Activated naive CD4-positive, alpha-beta T cell treated with anti-CD3 and anti-CD28 coated beads, Interleukin-2, amount 10 ng/mL, durations not matched to agents 7 days and 5 days (primary cell): ENCODE measurements at regions of chr17 and their contacts with region 1.

Region 1: DNA sequence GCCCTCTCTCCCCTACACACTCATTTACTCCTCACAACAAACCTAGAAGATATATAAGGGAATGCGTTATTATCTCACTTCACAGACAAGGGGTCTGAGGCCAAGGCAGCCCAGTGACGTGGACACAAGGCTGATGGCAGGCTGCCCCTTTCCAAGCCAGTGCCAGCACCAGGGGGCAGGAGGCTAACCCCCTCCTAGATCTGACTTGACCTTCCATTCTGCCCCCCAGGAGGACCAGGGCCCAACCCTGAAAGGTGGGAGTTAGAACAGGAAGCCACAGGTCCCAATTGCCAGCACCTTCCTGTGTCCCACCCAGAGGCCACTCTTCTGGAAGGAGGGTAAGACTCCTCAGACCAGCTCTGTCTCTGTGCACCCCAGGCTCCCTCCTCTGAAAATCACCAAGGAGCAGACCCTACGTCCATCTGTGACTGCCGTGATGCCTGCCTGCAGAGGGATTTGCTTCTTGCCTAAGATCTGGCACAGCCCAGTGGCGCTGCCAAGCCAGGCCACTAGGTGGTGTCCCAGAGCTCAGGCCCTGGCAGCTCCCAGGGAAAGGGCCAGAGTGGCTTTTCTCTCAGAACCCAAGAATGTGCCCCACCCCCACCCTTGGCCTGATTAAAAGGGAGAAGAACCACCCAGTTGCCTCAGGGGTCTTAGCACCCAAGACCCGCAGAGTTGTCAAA is 42.4 kb upstream of the MRPS23 start:
- DNase-seq: peak; percentile 84
- H3K4me3 Mint-ChIP-seq: no peak overlapping the region
- H3K27ac Mint-ChIP-seq: no peak overlapping the region
- H3K4me1 Mint-ChIP-seq: peaks cover 7% of the 10 kb centered on the region
- H3K27me3 Mint-ChIP-seq: peaks cover 54% of the 10 kb centered on the region

Region 2: DNA sequence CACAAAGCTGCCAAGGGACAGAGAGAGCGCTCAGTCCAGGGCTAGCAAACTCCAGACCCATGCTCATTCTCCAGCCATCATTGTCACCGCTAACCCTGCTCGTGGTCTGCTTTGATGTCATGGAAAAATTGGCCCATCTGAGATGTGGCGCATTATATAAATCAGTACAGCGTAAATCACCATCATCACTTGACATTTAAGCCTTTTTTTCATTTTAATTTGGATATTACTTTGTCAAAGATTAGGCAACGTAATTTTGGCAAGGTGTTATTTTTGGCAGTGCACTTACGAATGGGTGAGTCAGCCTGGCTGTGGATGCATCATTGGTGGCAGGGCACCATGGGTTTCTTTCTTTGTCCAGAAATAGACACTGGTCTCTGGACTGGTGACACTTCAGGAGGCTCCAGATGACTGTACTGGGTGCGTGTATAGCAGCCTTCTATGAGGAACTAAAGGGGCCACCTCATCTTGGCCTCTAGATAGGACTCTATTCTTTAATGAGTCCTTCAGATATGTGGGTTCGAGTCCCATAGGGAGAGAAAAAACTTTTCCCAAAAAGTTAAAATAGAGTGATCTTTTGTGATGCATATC is 469.6 kb before region 1 on chr17:
- CTCF ChIA-PET with region 1: no interaction called
- DNase-seq: no peak
- H3K4me3 Mint-ChIP-seq: no peak overlapping the region
- H3K27ac Mint-ChIP-seq: peak overlapping the region; percentile 33
- H3K4me1 Mint-ChIP-seq: peaks cover 19% of the 10 kb centered on the region
- H3K27me3 Mint-ChIP-seq: no peaks in the 10 kb centered on the region

Region 3: DNA sequence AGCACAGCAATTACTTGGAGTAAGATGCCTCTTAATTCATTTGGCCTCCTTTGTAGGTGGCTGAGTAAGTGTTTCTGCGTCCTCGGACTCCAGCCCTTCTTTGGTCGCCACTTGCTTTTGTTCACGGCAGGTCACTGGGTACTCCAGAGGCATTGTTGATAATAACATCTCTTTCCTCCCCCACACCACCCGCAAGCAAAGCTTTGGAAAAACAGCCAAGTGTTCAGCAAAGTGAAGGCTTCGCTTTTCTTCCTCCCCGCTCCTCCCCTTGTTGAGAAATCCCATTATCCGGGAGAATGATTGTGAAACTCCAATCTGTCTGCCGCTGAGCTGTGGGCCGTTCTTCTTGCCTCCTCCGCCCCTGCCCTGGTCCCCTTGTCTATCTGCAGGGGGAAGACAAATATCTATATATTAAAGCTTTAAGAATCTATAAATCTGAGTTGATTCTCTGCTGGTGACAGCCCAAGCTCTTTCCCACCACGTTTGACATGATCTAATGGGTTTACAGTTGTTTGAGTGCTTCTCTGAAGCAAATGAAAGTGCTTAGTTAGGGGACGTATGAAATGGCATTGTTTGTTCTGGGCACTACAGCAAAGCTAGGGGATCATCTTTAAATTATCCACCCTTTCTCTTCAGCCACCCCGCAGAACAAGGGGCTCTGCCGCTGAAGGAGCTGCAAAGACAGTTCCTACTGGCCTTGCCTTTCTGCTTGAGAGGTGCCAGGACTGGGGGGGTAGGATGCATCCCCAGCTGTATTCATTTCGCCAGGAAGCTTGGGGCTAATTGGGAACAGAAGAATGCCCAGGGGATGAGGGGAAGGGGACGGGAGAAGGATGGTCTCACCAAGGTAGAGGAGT is 314.3 kb before region 1 on chr17:
- CTCF ChIA-PET with region 1: no interaction called
- DNase-seq: no peak
- H3K4me3 Mint-ChIP-seq: no peak overlapping the region
- H3K27ac Mint-ChIP-seq: no peak overlapping the region
- H3K4me1 Mint-ChIP-seq: no peaks in the 10 kb centered on the region
- H3K27me3 Mint-ChIP-seq: no peaks in the 10 kb centered on the region

Region 4: DNA sequence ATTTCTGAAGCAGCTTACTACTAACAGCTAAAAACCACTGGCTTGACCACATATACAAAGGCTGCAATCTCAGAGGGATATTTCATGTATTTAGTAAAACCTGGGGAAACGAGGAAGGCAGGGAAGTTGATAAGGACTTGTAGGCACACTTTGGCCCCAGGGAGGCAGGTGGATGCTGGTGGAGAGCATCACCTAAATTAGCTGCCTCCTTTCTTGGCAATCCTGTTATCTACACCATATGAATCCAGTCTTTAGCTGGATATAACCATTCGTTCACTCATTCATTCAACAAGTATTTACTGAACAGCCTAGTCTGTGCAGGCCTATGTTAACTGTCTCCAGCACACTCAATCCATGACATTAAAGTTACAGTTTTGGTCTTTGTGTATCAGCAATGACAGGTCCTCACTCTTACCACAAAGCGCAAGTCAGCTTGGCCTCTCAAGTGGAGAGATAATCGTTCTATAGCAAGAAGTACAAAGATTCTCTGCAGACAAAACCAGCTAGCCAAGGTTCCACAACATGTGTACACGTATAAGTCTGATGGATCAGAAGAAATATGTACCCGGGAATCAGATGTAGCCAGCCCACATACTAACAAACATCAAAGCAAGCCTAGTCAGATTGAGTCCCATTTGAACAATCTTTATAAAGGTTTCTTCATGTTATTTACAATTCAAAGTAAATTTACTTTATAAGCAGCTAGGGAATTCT is 53.3 kb before region 1 on chr17:
- CTCF ChIA-PET with region 1: no interaction called
- DNase-seq: no peak
- H3K4me3 Mint-ChIP-seq: no peak overlapping the region
- H3K27ac Mint-ChIP-seq: no peak overlapping the region
- H3K4me1 Mint-ChIP-seq: peaks cover 2% of the 10 kb centered on the region
- H3K27me3 Mint-ChIP-seq: no peaks in the 10 kb centered on the region

Region 5: GRCh38 chr17:57861000-57861789 is 31.1 kb before region 1 on chr17:
- CTCF ChIA-PET with region 1: interaction called, 14 read pairs
- DNase-seq: peak; percentile 59
- H3K4me3 Mint-ChIP-seq: peak overlapping the region; percentile 62
- H3K27ac Mint-ChIP-seq: no peak overlapping the region
- H3K4me1 Mint-ChIP-seq: peaks cover 12% of the 10 kb centered on the region
- H3K27me3 Mint-ChIP-seq: peaks cover 74% of the 10 kb centered on the region

Region 6: DNA sequence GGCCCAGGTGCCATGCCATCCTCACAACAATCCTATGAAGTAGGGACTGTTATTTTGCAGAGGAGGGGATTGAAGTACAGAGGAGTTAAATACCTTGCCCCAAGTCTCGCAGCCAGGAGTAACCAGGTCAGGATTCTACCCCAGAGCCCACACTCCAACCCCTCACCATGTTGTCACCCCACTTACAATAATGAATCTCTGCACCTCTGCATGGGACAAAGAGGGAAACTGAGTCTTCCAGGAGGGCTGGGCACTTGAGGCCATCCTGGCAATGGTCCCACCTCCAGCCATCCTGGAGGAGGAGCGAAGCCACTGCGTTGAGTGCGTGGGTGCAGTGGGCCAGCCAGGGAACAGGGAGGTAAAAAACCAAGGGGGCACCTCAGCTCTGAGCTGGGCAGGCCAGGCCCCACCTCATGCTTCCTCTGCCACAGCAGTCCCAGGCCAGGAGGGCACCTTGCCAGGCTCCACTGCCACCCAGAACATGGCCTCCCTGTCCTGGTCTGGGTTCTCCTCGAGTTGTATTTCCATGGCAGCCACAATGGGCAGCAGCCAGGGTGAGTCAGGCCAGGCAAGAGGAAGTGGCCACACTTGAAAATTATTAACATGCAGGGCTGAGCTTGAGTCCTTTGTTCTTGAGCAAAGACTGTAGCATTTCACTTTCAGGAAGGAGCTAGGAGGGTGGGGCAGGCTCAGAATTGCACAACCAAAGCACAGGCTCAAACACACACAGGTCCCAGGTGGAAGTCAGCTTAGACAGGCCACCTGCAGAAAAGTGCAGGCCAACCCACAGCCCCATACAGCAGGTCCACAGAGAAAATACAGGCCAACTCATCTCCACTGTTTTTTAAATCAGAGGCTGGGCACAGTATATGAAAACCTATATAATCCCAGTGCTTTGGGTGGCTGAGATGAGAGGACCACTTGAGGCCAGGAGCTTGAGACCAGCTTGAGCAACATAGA is 10.8 kb after region 1 on chr17:
- CTCF ChIA-PET with region 1: interaction called, 17 read pairs
- DNase-seq: peak; percentile 48
- H3K4me3 Mint-ChIP-seq: no peak overlapping the region
- H3K27ac Mint-ChIP-seq: peak overlapping the region; percentile 47
- H3K4me1 Mint-ChIP-seq: peaks cover 41% of the 10 kb centered on the region
- H3K27me3 Mint-ChIP-seq: peaks cover 8% of the 10 kb centered on the region

Region 7: DNA sequence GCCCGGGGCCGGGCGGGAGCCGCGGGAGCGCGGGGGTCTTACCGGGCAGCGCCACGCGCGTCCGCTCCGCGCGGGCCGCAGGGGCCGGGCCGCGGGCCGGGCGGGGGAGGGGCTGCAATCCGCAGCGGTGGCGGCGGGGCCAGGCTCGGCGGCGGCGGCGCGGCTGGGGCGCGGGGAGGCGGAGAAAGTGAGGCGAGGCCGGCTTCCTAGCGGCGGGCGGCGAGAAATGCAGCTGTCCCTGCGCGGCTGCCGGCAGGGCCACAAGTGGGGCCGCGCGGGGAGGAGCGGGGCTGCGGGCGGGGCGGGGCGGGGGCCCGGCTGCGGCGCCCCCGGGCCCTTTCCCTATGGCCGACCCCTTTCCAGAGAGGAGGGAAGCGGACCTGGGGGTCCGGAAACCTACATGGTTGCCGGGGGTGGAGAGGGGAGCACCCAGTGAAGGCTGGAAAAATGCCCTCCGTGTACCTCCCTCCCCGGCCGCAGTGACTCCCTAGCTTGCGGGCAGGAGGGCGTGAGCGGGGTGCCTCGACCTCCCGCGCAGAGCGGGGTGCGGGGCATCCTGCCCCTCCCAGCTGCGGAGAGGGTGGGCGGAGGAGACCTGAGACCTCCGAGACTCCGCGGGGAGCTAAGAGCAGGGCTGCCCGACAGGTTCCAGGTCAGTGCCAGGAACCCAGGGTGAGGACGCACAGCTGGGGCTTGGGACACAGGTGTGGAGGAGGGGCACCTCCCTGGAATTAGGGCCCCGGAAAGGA is 63.1 kb after region 1 on chr17 and contains the start of gene CUEDC1:
- CTCF ChIA-PET with region 1: interaction called, 18 read pairs
- DNase-seq: peak; percentile 75
- H3K4me3 Mint-ChIP-seq: peak within 1 kb of the TSS; percentile 53
- H3K27ac Mint-ChIP-seq: no peak within 1 kb of the TSS
- H3K4me1 Mint-ChIP-seq: peaks cover 33% of the 10 kb centered on the region
- H3K27me3 Mint-ChIP-seq: peaks cover 80% of the 10 kb centered on the region

Region 8: DNA sequence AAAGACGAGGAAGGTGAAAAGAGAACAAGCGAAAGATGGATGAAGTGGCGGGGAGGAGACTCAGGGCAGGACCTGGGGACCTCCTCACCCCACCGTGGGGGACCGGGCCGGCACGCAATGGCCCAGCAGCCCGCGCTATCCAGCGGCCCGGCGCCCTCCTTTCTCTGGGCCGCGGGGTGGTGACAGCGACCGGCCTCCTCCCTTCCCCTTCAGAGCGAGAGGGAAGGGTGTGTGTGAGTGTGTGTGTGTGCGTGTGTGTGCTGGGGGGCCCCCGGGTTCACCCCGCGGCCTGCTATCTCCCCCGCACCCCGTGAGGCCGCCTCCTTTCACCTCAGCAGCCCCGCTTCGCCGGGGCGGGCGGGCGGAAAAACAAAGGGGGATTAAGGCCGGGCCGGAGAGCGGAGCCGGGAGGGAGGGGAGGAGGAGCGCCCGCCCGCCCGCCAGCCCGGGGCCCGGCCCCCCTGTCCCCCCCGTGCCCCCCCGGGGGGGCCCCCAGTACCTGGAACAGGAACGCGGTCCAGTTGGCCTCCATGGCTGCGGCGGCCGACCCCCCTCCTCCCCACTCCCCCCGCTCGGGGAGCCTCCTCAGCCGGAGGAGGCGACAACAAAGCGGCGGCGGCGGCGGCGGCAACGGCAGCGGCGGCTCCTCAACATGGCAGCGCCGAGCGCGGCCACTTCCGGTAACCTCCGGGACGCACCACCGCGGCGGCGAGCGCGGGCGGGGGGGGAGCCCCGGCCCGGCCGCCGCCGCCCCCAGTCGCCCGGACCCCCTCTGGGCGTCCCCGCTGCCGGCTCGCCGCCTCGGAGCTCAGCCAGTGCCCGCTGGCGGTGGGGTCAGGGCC is 95.5 kb after region 1 on chr17 and contains the start of gene VEZF1:
- CTCF ChIA-PET with region 1: interaction called, 12 read pairs
- DNase-seq: peak; percentile 86
- H3K4me3 Mint-ChIP-seq: peak within 1 kb of the TSS; percentile 92
- H3K27ac Mint-ChIP-seq: peak within 1 kb of the TSS; percentile 95
- H3K4me1 Mint-ChIP-seq: peaks cover 56% of the 10 kb centered on the region
- H3K27me3 Mint-ChIP-seq: peaks cover 4% of the 10 kb centered on the region

Region 9: GRCh38 chr17:57995076-57995956 is 103.0 kb after region 1 on chr17:
- CTCF ChIA-PET with region 1: interaction called, 26 read pairs
- DNase-seq: peak; percentile 67
- H3K4me3 Mint-ChIP-seq: no peak overlapping the region
- H3K27ac Mint-ChIP-seq: no peak overlapping the region
- H3K4me1 Mint-ChIP-seq: peaks cover 48% of the 10 kb centered on the region
- H3K27me3 Mint-ChIP-seq: no peaks in the 10 kb centered on the region